ENCODE measurements at regions of chr5 and their contacts with region 1.

Region 1: DNA sequence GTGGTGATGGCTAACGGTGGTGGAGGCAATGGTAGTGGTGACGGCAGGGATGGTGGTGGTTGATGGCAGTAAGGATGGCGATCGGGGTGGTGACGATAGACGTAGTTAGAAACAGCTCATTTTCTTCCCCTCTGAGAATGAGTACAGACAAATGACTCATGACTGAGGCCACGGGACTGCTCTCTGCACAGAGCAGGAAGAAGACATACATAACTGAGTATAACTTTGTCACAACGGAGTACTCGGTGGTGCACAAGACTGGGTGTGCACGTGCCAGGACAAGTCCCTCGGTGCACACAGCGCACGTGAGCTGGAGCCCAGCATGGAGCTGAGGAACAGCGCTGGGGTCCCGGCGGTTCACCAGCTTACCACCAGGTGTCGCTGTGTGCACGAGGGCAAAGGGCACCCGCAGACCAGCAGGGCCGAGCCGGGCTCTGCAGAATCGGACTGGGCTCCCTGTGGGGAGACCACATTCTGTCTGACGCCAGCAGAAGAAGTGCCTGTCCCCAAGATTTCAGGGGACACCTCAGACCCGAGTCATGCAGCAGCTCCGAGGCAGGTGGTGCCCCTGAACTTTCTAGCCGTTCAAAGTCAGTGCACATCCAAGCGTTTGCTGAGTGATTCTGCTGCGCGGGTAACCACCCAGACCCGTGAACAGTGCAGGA is 188.6 kb downstream of the FSTL4 start:
- DNase-seq: peak; percentile 91
- ATAC-seq: peak; percentile 80
- H3K4me3 Mint-ChIP-seq: no peak overlapping the region
- H3K27ac Mint-ChIP-seq: no peak overlapping the region
- H3K4me1 Mint-ChIP-seq: peaks cover 48% of the 10 kb centered on the region
- H3K27me3 Mint-ChIP-seq: peaks cover 33% of the 10 kb centered on the region
- CTCF ChIP-seq: peak; percentile 96

Region 2: DNA sequence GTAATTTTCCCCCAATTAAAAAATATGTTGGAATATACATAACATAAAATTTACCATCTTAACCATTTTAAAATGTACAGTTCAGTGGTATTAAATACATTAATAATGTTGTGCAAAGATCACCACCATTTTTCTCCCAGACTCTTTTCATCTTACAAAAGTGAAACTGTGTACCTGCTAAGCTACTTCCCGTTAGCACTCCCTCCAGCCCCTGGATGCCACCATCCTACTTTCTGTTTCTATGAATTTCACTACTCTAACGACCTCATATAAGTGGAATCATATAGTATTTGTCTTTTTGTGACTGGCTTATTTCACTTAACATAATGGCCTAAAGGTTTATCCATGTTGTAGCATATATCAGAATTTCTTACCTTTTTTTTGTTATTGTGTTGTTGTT is 259.0 kb before region 1 on chr5:
- CTCF ChIA-PET with region 1: no interaction called
- POLR2A ChIA-PET with region 1: no interaction called
- DNase-seq: no peak
- ATAC-seq: no peak
- H3K4me3 Mint-ChIP-seq: no peak overlapping the region
- H3K27ac Mint-ChIP-seq: no peak overlapping the region
- H3K4me1 Mint-ChIP-seq: no peaks in the 10 kb centered on the region
- H3K27me3 Mint-ChIP-seq: peaks cover 8% of the 10 kb centered on the region
- CTCF ChIP-seq: no peak

Region 3: GRCh38 chr5:133247881-133248624 is 175.7 kb before region 1 on chr5:
- CTCF ChIA-PET with region 1: interaction called, 12 read pairs
- POLR2A ChIA-PET with region 1: no interaction called
- DNase-seq: peak; percentile 77
- ATAC-seq: peak; percentile 85
- H3K4me3 Mint-ChIP-seq: no peak overlapping the region
- H3K27ac Mint-ChIP-seq: no peak overlapping the region
- H3K4me1 Mint-ChIP-seq: peaks cover 7% of the 10 kb centered on the region
- H3K27me3 Mint-ChIP-seq: no peaks in the 10 kb centered on the region
- CTCF ChIP-seq: peak; percentile 15; the same call in 1 of the 2 replicates

Region 4: DNA sequence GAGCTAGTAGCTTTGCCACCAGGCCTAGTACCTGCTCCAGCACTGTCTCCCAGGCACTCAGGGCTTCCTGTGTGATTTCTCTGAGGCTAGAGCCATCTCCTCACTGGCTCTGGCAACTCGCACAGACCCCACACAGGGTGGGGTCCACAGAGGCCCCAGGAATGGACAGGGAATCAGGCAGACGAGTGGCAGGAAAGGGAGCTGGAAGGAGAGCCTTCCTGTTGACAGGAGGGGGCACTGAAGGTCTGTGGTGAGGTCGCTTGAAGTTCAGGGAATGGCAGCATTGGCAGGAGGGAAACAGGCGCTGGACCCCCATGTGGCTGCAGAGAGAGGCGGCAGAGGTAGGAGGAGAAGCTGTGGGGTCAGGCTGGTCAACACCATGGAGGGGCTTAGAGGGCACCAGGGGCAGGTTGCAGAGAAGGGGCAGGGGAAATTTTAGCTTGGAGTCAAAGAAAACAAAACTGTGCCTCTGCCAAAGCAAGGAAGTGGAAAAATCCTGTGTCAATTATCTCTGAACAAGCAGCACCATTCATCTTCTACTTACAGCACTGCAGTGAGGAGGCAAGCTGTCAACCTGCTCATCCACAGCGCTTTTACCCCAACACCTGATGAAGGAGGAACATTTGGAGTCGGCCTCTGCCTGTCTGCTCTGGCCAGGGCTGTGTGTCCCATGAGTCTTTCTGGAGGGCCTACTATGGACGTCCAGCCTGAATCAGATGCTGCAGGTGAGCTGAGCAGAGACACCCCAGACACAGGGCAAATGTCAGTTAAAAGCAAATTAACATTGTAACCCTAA is 81.6 kb before region 1 on chr5:
- CTCF ChIA-PET with region 1: interaction called, 25 read pairs
- POLR2A ChIA-PET with region 1: no interaction called
- DNase-seq: peak; percentile 29
- ATAC-seq: peak; percentile 68
- H3K4me3 Mint-ChIP-seq: no peak overlapping the region
- H3K27ac Mint-ChIP-seq: no peak overlapping the region
- H3K4me1 Mint-ChIP-seq: peaks cover 63% of the 10 kb centered on the region
- H3K27me3 Mint-ChIP-seq: peaks cover 21% of the 10 kb centered on the region
- CTCF ChIP-seq: no peak

Region 5: DNA sequence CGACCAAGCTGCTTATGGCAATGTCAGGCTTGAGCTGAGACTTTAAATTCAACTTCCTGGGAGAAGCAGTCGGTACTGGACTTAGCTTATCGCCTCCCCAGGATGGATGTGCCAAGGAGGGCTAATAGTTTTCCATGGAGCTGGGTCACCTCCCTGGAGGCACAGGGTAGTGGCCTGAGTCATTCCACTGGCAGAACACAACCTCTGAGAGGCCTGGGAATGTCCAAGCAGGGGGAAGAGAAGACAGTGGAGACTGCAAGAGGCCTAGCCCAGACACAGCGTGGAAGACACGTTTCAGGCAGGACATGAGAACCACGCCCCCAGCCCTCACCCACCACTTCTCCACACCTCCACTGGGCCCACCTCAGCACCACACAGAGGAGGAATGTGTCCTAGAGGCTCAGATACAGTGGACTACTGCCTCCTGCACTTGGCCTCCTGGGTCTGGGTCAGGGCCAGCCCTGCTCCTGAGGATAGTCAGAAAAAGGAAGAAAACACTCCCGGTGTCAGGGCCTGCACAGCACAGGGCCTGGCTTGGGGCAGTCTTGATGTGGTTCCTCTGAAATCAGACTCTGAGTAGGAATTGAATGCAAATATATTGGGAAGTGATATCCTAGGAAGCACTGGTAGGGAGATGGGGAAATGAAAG is 16.8 kb after region 1 on chr5:
- CTCF ChIA-PET with region 1: interaction called, 16 read pairs
- POLR2A ChIA-PET with region 1: interaction called, 3 read pairs
- DNase-seq: no peak
- ATAC-seq: no peak
- H3K4me3 Mint-ChIP-seq: no peak overlapping the region
- H3K27ac Mint-ChIP-seq: no peak overlapping the region
- H3K4me1 Mint-ChIP-seq: peaks cover 5% of the 10 kb centered on the region
- H3K27me3 Mint-ChIP-seq: no peaks in the 10 kb centered on the region
- CTCF ChIP-seq: no peak

Region 6: DNA sequence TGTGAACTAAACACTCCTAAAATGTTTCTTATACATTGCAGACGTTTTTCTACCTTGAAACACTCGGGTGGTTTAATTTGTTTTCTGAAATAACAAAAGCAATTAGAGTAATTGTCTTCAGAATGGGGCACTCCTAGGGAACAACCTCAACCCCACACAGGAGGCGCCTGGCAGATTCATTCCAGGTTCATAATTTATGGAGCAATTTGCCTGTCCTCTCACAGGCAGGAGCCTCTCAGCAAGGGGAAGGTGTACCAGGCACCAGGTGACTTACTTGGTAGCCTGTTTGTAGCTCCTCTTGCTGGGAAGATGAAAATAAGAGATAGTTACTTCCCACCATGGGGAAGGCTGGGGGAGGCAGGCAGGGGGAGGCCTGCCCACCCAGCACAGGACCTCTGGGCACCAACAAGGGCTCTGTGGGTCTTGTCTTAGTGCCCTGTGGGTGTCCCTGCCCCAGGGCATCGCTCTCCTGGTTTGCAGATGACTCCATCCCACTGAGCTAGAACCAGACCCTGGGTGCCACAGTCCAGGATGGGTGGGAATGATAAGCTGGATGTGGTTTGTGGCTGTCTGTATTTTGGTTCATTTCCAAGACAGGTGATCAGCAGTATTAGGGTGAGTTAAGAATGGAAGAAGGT is 44.2 kb after region 1 on chr5:
- CTCF ChIA-PET with region 1: interaction called, 103 read pairs
- POLR2A ChIA-PET with region 1: no interaction called
- DNase-seq: no peak
- ATAC-seq: no peak
- H3K4me3 Mint-ChIP-seq: no peak overlapping the region
- H3K27ac Mint-ChIP-seq: no peak overlapping the region
- H3K4me1 Mint-ChIP-seq: peaks cover 13% of the 10 kb centered on the region
- H3K27me3 Mint-ChIP-seq: no peaks in the 10 kb centered on the region
- CTCF ChIP-seq: no peak

Region 7: GRCh38 chr5:133669472-133669871 is 245.7 kb after region 1 on chr5:
- CTCF ChIA-PET with region 1: no interaction called
- POLR2A ChIA-PET with region 1: no interaction called
- DNase-seq: no peak
- ATAC-seq: no peak
- H3K4me3 Mint-ChIP-seq: no peak overlapping the region
- H3K27ac Mint-ChIP-seq: no peak overlapping the region
- H3K4me1 Mint-ChIP-seq: no peaks in the 10 kb centered on the region
- H3K27me3 Mint-ChIP-seq: no peaks in the 10 kb centered on the region; the same call in 1 of the 2 replicates
- CTCF ChIP-seq: no peak

Region 8: GRCh38 chr5:133868946-133869518 is 445.3 kb after region 1 on chr5:
- CTCF ChIA-PET with region 1: interaction called, 10 read pairs
- POLR2A ChIA-PET with region 1: no interaction called
- DNase-seq: peak; percentile 74
- ATAC-seq: peak; percentile 62
- H3K4me3 Mint-ChIP-seq: no peak overlapping the region
- H3K27ac Mint-ChIP-seq: no peak overlapping the region
- H3K4me1 Mint-ChIP-seq: no peaks in the 10 kb centered on the region
- H3K27me3 Mint-ChIP-seq: no peaks in the 10 kb centered on the region
- CTCF ChIP-seq: peak; percentile 55